Endothelial cell of umbilical vein (primary cell): ENCODE measurements at regions of chr5 and their contacts with region 1.

Region 1: GRCh38 chr5:121138495-121138907 is 674.4 kb downstream of the PRR16 start:
- DNase-seq: peak; percentile 83
- H3K4me3 ChIP-seq: no peak overlapping the region
- H3K27ac ChIP-seq: peak overlapping the region; percentile 43
- H3K4me1 ChIP-seq: peaks cover 19% of the 10 kb centered on the region
- H3K27me3 ChIP-seq: no peaks in the 10 kb centered on the region
- CTCF ChIP-seq: no peak
- POLR2A ChIP-seq: no peak

Region 2: DNA sequence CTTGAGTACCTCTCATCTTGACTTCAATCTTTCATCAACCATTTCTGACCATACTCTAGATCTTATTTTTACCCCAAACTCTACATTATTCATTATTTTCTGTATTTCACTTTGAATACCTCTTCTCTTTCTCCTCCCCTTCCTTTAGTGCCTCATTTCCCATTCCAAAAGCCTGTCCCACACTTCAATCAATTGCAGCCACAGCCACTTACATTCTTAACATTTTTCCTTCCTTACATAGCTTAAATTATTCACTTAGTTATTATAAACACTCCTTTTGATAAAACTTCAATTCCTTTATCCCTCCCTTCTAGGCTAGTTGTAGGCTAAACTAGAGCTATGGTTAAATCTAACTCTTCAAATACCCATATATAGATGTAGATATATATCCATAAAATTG is 330.4 kb before region 1 on chr5:
- CTCF ChIA-PET with region 1: no interaction called
- POLR2A ChIA-PET with region 1: no interaction called
- dilution Hi-C with region 1: no loop called
- intact Hi-C with region 1: no loop called
- DNase-seq: no peak
- H3K4me3 ChIP-seq: no peak overlapping the region
- H3K27ac ChIP-seq: no peak overlapping the region
- H3K4me1 ChIP-seq: no peaks in the 10 kb centered on the region
- H3K27me3 ChIP-seq: no peaks in the 10 kb centered on the region
- CTCF ChIP-seq: no peak
- POLR2A ChIP-seq: no peak

Region 3: GRCh38 chr5:120982351-120982750 is 156.2 kb before region 1 on chr5:
- CTCF ChIA-PET with region 1: no interaction called
- POLR2A ChIA-PET with region 1: no interaction called
- dilution Hi-C with region 1: no loop called
- intact Hi-C with region 1: no loop called
- DNase-seq: no peak
- H3K4me3 ChIP-seq: no peak overlapping the region
- H3K27ac ChIP-seq: no peak overlapping the region
- H3K4me1 ChIP-seq: no peaks in the 10 kb centered on the region
- H3K27me3 ChIP-seq: no peaks in the 10 kb centered on the region
- CTCF ChIP-seq: no peak
- POLR2A ChIP-seq: no peak

Region 4: DNA sequence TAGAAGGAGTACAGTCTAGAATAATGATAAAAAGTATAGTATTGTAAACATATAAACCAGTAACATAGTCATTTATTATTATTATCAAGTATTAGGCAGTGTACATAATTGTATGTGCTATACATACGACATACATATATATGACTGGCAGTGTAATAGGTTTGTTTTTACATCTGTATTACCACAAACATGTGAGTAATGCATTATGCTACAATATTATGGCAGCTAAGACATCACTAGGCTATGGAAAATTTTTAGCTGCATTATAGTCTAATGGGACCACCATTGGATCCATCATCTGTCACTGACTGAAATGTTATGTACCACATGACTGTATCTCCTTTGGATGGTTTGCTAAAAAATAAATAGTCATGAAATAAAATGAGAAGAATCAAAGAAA is 144.4 kb before region 1 on chr5:
- CTCF ChIA-PET with region 1: no interaction called
- POLR2A ChIA-PET with region 1: no interaction called
- dilution Hi-C with region 1: no loop called
- intact Hi-C with region 1: no loop called
- DNase-seq: no peak
- H3K4me3 ChIP-seq: no peak overlapping the region
- H3K27ac ChIP-seq: no peak overlapping the region
- H3K4me1 ChIP-seq: no peaks in the 10 kb centered on the region
- H3K27me3 ChIP-seq: no peaks in the 10 kb centered on the region
- CTCF ChIP-seq: no peak
- POLR2A ChIP-seq: no peak

Region 5: DNA sequence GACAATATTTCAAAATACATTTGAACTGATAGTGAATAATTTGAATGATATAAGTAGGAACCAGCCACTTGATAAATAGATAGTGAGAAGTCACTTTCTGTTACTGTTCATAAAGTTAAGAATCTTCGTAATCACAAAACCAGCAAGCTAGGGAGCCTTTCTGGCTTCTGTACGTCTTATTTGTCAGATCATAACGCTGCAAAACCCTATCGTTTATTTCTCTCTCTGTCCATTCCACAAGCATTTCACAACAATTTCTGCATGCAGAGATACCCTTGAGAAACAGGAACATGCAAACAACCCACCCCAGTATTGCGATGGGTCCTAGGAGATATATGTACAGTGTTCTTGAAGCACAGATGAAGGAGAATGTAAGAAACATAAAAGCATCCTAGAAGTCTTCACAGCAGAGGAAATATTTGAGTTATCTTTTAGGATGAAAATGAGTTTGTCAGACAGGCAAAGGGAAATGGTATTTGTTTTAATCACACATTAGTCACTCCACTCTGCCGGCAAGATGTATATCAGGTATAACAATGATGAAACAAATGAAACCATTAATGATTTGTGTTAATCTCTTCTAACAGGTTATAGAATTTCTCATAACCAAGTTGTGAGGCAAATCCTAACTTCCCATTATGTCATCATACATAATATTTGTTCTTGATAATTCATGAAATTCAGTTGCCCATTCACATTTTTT is 44.4 kb after region 1 on chr5:
- CTCF ChIA-PET with region 1: interaction called, 4 read pairs
- POLR2A ChIA-PET with region 1: no interaction called
- dilution Hi-C with region 1: no loop called
- intact Hi-C with region 1: loop called (anchors 1 kb)
- DNase-seq: peak; percentile 62
- H3K4me3 ChIP-seq: no peak overlapping the region
- H3K27ac ChIP-seq: peak overlapping the region; percentile 15
- H3K4me1 ChIP-seq: peaks cover 18% of the 10 kb centered on the region
- H3K27me3 ChIP-seq: no peaks in the 10 kb centered on the region
- CTCF ChIP-seq: no peak
- POLR2A ChIP-seq: no peak

Region 6: GRCh38 chr5:121263456-121263855 is 125.0 kb after region 1 on chr5:
- CTCF ChIA-PET with region 1: no interaction called
- POLR2A ChIA-PET with region 1: no interaction called
- dilution Hi-C with region 1: no loop called
- intact Hi-C with region 1: no loop called
- DNase-seq: no peak
- H3K4me3 ChIP-seq: no peak overlapping the region
- H3K27ac ChIP-seq: no peak overlapping the region
- H3K4me1 ChIP-seq: no peaks in the 10 kb centered on the region
- H3K27me3 ChIP-seq: no peaks in the 10 kb centered on the region
- CTCF ChIP-seq: no peak
- POLR2A ChIP-seq: no peak

Region 7: GRCh38 chr5:121325930-121326329 is 187.4 kb after region 1 on chr5:
- CTCF ChIA-PET with region 1: no interaction called
- POLR2A ChIA-PET with region 1: no interaction called
- dilution Hi-C with region 1: no loop called
- intact Hi-C with region 1: loop called (anchors 2 kb)
- DNase-seq: peak; percentile 90
- H3K4me3 ChIP-seq: no peak overlapping the region
- H3K27ac ChIP-seq: no peak overlapping the region
- H3K4me1 ChIP-seq: no peaks in the 10 kb centered on the region
- H3K27me3 ChIP-seq: no peaks in the 10 kb centered on the region
- CTCF ChIP-seq: no peak
- POLR2A ChIP-seq: peak; percentile 34